Heart right ventricle (tissue), 16 donors: ENCODE measurements at regions of chr10 and their contacts with region 1.

Region 1: DNA sequence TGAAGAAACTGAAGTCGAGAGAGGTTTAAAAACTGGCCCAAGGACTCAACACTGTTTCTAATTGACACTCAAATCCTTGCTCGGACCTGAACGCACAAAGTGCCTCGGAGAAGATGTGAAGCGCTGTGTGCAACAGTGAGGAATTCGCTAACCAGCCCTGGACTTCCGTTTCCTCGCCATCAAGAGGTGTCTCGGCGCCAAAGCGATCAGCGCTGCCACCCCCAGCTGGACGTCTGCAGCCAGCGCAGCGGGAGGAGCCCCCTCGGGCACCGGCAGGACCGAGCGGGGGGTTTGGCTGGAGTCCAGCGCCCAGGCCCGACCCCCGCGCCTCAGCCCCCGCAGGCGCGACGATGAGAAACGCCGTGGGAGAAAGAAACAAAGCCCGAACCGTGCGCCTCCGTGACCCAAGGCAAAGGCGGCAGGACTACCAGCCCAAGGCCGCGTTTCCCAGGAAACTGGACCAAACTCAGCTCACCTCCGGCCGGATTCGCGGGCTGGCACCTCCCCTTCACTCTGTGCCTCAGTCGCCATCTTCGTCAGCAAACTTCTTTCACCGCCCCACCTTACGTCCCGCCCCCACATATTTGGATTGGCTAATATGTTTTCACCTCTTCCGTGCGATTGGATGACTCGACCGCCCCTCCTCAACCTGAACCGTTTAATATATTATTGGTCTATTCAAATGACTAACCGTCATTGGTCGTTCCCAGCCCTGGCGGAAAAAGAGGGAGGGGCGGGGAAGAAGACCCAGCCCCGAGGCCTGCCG is at the start of gene ARHGAP19:
- DNase-seq: peak; percentile 89 to 98
- ATAC-seq: peak; percentile 99 to 100 (median 100)
- H3K4me3 ChIP-seq: peak within 1 kb of the TSS; percentile 57 to 97 (median 90)
- H3K27ac ChIP-seq: peak within 1 kb of the TSS; percentile 73 to 97 (median 94)
- H3K4me1 ChIP-seq: peaks cover 0 to 14% (median 9%) of the 10 kb centered on the region in 9 donors
- H3K27me3 ChIP-seq: no peaks in the 10 kb centered on the region
- CTCF ChIP-seq: peak in 3 of 9 donors; percentile 18 to 33 (median 22)
- total RNA-seq, gene ARHGAP19: 2.3 to 6.2 (median 3.6) TPM

Region 2: DNA sequence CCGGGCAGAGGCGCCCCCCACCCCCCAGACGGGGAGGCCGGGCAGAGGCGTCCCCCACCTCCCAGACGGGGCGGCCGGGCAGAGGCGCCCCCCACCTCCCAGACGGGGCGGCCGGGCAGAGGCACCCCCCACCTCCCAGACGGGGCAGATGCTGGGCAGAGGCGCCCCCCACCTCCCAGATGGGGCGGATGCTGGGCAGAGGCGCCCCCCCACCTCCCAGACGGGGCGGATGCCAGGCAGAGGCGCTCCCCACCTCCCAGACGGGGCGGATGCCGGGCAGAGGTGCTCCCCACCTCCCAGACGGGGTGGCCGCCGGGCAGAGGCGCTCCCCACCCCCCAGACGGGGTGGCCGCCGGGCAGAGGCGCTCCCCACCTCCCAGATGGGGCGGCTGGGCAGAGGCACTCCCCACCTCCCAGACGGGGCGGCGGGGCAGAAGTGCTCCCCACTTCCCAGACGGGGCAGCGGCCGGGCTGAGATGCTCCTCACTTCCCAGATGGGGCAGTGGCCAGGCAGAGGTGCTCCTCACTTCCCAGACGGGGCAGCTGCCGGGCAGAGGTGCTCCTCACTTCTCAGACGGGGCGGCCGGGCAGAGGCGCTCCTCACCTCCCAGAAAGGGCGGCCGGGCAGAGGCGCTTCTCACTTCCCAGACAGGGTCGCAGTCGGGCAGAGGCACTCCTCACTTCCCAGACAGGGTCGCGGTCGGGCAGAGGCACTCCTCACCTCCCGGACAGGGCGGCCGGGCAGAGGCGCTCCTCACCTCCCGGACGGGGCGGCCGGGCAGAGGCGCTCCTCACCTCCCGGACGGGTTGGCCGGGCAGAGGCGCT is 1482.7 kb before region 1 on chr10:
- intact Hi-C with region 1: no loop called
- DNase-seq: no peak
- ATAC-seq: no peak
- H3K4me3 ChIP-seq: no peak overlapping the region
- H3K27ac ChIP-seq: no peak overlapping the region
- H3K4me1 ChIP-seq: peaks cover 0 to 18% (median 14%) of the 10 kb centered on the region in 9 donors
- H3K27me3 ChIP-seq: no peaks in the 10 kb centered on the region
- CTCF ChIP-seq: no peak

Region 3: GRCh38 chr10:97270523-97271154 is 21.6 kb before region 1 on chr10:
- intact Hi-C with region 1: no loop called
- DNase-seq: no peak
- ATAC-seq: no peak
- H3K4me3 ChIP-seq: peak overlapping the region in 1 of 10 donors; percentile 4
- H3K27ac ChIP-seq: no peak overlapping the region
- H3K4me1 ChIP-seq: peaks cover 0 to 9% (median 0%) of the 10 kb centered on the region in 9 donors
- H3K27me3 ChIP-seq: no peaks in the 10 kb centered on the region
- CTCF ChIP-seq: no peak

Region 4: GRCh38 chr10:97318772-97319651 is 26.7 kb after region 1 on chr10 and contains the start of gene FRAT1:
- intact Hi-C with region 1: loop called in 1 of 10 experiments (anchors 5 kb)
- DNase-seq: peak; percentile 92 to 93
- ATAC-seq: peak; percentile 88 to 96 (median 92)
- H3K4me3 ChIP-seq: peak within 1 kb of the TSS; percentile 51 to 97 (median 84)
- H3K27ac ChIP-seq: peak within 1 kb of the TSS; percentile 96 to 100 (median 98)
- H3K4me1 ChIP-seq: peaks cover 6 to 53% (median 24%) of the 10 kb centered on the region in 9 donors
- H3K27me3 ChIP-seq: no peaks in the 10 kb centered on the region
- CTCF ChIP-seq: no peak
- total RNA-seq, gene FRAT1: 2.3 to 6.6 (median 3.1) TPM

Region 5: GRCh38 chr10:97327348-97328294 is 35.3 kb after region 1 on chr10:
- intact Hi-C with region 1: loop called in 5 of 10 experiments (anchors 5 kb)
- DNase-seq: no peak
- ATAC-seq: no peak
- H3K4me3 ChIP-seq: no peak overlapping the region
- H3K27ac ChIP-seq: no peak overlapping the region
- H3K4me1 ChIP-seq: peaks cover 3 to 51% (median 35%) of the 10 kb centered on the region in 9 donors
- H3K27me3 ChIP-seq: no peaks in the 10 kb centered on the region
- CTCF ChIP-seq: no peak

Region 6: DNA sequence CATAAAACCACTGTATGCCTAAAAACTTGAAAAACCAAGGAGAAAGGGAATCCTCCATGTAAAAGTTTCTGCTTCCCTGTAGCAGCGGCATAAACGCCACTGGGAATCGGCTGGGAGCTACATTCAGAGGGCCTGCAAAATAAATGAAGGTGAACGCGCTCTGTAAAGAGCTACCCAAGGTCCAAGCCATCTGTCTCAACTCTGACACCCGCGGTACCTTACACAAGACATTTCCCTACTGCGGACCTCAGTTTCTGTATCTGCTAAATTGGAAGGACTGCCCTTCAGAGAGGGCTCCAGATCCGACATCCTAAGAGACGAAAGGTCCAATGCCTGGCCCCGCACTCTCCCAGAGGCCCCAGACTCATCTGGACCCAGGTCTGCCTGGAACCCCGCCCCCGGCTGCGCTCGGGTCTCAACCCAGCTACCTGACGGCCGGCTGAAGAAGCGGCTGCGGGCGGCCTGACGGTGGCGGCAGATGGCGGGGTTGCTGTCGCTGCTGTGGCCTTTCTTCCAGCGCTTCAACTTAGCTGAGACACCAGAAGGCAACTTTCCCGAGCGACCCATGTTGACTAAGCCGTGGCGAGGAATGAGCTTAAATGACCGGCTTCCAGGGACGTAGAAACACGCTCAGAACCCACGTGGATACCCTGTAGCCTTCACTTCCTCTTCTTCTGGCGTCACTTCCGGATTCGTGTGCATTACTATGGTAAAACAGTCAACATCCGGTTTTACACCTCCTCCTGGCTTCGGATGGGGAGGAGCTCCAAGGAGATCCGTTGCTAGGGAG is 108.6 kb after region 1 on chr10 and contains the start of gene RRP12:
- intact Hi-C with region 1: no loop called
- DNase-seq: peak; percentile 37 to 96
- ATAC-seq: peak; percentile 95 to 98 (median 97)
- H3K4me3 ChIP-seq: peak within 1 kb of the TSS; percentile 48 to 96 (median 80)
- H3K27ac ChIP-seq: peak within 1 kb of the TSS in 9 of 10 donors; percentile 56 to 91 (median 83)
- H3K4me1 ChIP-seq: peaks cover 0 to 30% (median 13%) of the 10 kb centered on the region in 9 donors
- H3K27me3 ChIP-seq: no peaks in the 10 kb centered on the region
- CTCF ChIP-seq: peak in 4 of 9 donors; percentile 8 to 36 (median 22)
- total RNA-seq, gene RRP12: 11.1 to 30.5 (median 20.8) TPM

Region 7: GRCh38 chr10:98224509-98224908 is 932.2 kb after region 1 on chr10:
- intact Hi-C with region 1: no loop called
- DNase-seq: no peak
- ATAC-seq: no peak
- H3K4me3 ChIP-seq: no peak overlapping the region
- H3K27ac ChIP-seq: no peak overlapping the region
- H3K4me1 ChIP-seq: peaks cover 0 to 22% (median 18%) of the 10 kb centered on the region in 9 donors
- H3K27me3 ChIP-seq: no peaks in the 10 kb centered on the region
- CTCF ChIP-seq: no peak